ENCODE measurements at regions of chr7 and their contacts with region 1.

Region 1: GRCh38 chr7:39948956-39949928 is 814 bp upstream of the CDK13 start:
- DNase-seq: peak; percentile 97
- ATAC-seq: peak; percentile 72
- H3K4me3 Mint-ChIP-seq: peak overlapping the region; percentile 99
- H3K27ac Mint-ChIP-seq: peak overlapping the region; percentile 100
- H3K4me1 Mint-ChIP-seq: peaks cover 40% of the 10 kb centered on the region
- H3K27me3 Mint-ChIP-seq: no peaks in the 10 kb centered on the region
- CTCF ChIP-seq: no peak

Region 2: GRCh38 chr7:38908759-38909335 is 1040.4 kb before region 1 on chr7 and contains the start of gene VPS41:
- CTCF ChIA-PET with region 1: no interaction called
- POLR2A ChIA-PET with region 1: no interaction called
- intact Hi-C with region 1: loop called (anchors 2 kb)
- DNase-seq: peak; percentile 56
- ATAC-seq: peak; percentile 96
- H3K4me3 Mint-ChIP-seq: peak within 1 kb of the TSS; percentile 98
- H3K27ac Mint-ChIP-seq: peak within 1 kb of the TSS; percentile 94
- H3K4me1 Mint-ChIP-seq: peaks cover 52% of the 10 kb centered on the region
- H3K27me3 Mint-ChIP-seq: peaks cover 2% of the 10 kb centered on the region
- CTCF ChIP-seq: no peak
- total RNA-seq, gene VPS41: 78.5 and 91.8 TPM in 2 replicates

Region 3: GRCh38 chr7:39623018-39623731 is 326.1 kb before region 1 on chr7 and contains the start of gene RALA:
- CTCF ChIA-PET with region 1: no interaction called
- POLR2A ChIA-PET with region 1: interaction called, 15 read pairs
- intact Hi-C with region 1: loop called (anchors 1 kb)
- DNase-seq: peak; percentile 84
- ATAC-seq: peak; percentile 91
- H3K4me3 Mint-ChIP-seq: peak within 1 kb of the TSS; percentile 94
- H3K27ac Mint-ChIP-seq: peak within 1 kb of the TSS; percentile 91
- H3K4me1 Mint-ChIP-seq: peaks cover 55% of the 10 kb centered on the region
- H3K27me3 Mint-ChIP-seq: no peaks in the 10 kb centered on the region
- CTCF ChIP-seq: no peak
- total RNA-seq, gene RALA: 32.6 and 37.3 TPM in 2 replicates

Region 4: GRCh38 chr7:39908141-39908540 is 41.1 kb before region 1 on chr7:
- CTCF ChIA-PET with region 1: no interaction called
- POLR2A ChIA-PET with region 1: no interaction called
- intact Hi-C with region 1: no loop called
- DNase-seq: no peak
- ATAC-seq: no peak
- H3K4me3 Mint-ChIP-seq: no peak overlapping the region
- H3K27ac Mint-ChIP-seq: no peak overlapping the region
- H3K4me1 Mint-ChIP-seq: no peaks in the 10 kb centered on the region
- H3K27me3 Mint-ChIP-seq: peaks cover 8% of the 10 kb centered on the region
- CTCF ChIP-seq: no peak

Region 5: DNA sequence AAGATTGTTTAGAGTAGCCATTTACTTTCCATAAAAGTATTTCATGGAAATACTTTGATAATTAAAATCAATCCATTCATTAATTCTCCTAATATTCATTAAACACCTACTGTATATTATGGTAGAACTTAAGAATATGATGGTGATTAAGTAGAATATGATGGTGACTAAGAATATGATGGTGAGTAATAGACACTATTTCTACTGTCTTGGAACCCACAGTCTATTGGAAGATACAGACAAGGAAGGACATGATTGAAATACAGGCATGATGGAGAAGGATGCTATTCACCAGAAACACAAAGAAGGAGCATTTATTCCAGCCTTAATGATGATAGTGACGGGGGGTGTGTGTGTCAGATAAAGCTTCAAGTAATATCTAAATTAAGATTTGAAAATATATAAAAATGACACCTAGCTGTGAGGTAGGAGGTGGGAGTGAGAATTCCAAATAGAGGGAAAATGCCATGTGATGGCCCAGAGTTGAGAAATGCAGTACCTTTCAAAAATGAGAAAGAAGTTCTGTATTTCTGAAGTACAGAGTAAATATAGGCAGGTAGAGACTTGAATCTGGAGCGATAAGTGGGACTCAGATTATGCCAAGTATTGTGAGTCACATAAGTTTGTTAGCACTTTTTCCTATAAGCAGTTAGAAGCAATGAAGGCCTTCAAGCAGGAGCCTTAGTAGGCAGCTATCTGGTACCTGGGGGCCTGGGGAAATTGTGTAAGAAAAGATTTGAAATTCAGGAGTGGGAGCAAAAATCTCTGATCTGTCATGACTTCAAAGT is 11.7 kb before region 1 on chr7:
- CTCF ChIA-PET with region 1: no interaction called
- POLR2A ChIA-PET with region 1: interaction called, 10 read pairs
- intact Hi-C with region 1: no loop called
- DNase-seq: no peak
- ATAC-seq: no peak
- H3K4me3 Mint-ChIP-seq: no peak overlapping the region
- H3K27ac Mint-ChIP-seq: no peak overlapping the region
- H3K4me1 Mint-ChIP-seq: no peaks in the 10 kb centered on the region
- H3K27me3 Mint-ChIP-seq: peaks cover 6% of the 10 kb centered on the region
- CTCF ChIP-seq: no peak

Region 6: GRCh38 chr7:40015790-40016296 is 66.6 kb after region 1 on chr7:
- CTCF ChIA-PET with region 1: interaction called, 4 read pairs
- POLR2A ChIA-PET with region 1: interaction called, 18 read pairs
- intact Hi-C with region 1: loop called (anchors 2 kb)
- DNase-seq: no peak
- ATAC-seq: peak; percentile 94
- H3K4me3 Mint-ChIP-seq: no peak overlapping the region
- H3K27ac Mint-ChIP-seq: peak overlapping the region; percentile 72
- H3K4me1 Mint-ChIP-seq: peaks cover 18% of the 10 kb centered on the region
- H3K27me3 Mint-ChIP-seq: no peaks in the 10 kb centered on the region
- CTCF ChIP-seq: no peak

Region 7: GRCh38 chr7:40134428-40135316 is 185.4 kb after region 1 on chr7 and contains the starts of genes MPLKIP and SUGCT:
- CTCF ChIA-PET with region 1: interaction called, 3 read pairs
- POLR2A ChIA-PET with region 1: interaction called, 26 read pairs
- intact Hi-C with region 1: loop called (anchors 1 kb)
- DNase-seq: peak; percentile 91
- ATAC-seq: peak; percentile 90
- H3K4me3 Mint-ChIP-seq: peak within 1 kb of the TSS; percentile 97
- H3K27ac Mint-ChIP-seq: peak within 1 kb of the TSS; percentile 97
- H3K4me1 Mint-ChIP-seq: peaks cover 35% of the 10 kb centered on the region
- H3K27me3 Mint-ChIP-seq: no peaks in the 10 kb centered on the region
- CTCF ChIP-seq: no peak
- total RNA-seq, gene MPLKIP: 29.9 and 35.1 TPM in 2 replicates
- total RNA-seq, gene SUGCT: 0.61 and 1.3 TPM in 2 replicates

Measured in activated B cell treated with CpG ODN at 0.5 μM for 24 hours (primary cell).